ENCODE measurements at regions of chr20 and their contacts with region 1.

Region 1: DNA sequence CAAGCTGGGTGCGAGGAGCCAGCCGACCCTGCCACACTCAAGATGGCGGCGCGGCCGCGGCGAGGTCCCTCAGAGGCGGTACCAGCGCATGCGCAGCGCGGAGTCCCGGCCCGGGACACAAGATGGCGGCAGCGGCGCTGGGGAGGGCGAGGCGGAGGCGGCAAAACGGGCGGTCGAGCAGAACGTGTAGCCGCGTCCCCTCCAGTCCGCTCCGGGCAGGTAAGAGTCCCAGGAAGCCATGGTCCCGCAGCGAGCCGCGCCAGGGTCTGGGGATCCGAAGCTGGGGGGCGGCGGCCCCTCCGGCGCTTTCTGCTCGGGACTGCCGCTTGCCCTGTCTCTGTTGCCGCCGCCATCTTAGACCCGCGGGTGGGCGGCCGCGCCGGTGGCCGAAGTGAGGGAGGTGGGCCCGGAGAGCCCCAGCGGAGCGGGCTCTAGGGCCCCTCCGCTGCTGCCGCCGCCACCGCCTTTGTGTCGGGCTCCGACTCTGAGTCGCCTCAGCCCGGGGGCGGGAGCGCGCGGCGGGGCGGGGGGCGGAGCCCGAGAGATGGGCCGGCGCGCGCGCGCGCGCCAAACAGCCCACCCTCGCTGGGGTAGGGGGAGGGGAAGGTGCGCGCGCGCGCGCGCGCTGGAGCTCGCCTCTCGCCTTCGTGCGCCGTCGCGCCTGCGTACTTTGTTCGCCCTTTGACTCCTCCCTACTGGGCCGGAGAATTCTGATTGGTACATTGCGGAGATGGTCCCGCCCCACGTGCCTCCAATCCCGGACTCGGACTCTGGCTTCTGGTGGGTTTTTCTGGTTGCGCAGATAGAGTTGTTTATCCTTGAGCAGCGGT is at the start of gene PCIF1:
- DNase-seq: peak; percentile 96 to 100 (median 99)
- H3K4me3 ChIP-seq: peak within 1 kb of the TSS; percentile 97
- H3K4me3 Mint-ChIP-seq: peak within 1 kb of the TSS; percentile 90 to 98 (median 97)
- H3K27ac ChIP-seq: peak within 1 kb of the TSS; percentile 95
- H3K27ac Mint-ChIP-seq: peak within 1 kb of the TSS; percentile 95 to 99 (median 98)
- H3K4me1 ChIP-seq: peaks cover 12% of the 10 kb centered on the region
- H3K4me1 Mint-ChIP-seq: peaks cover 26 to 42% (median 27%) of the 10 kb centered on the region in 3 donors
- H3K27me3 ChIP-seq: no peaks in the 10 kb centered on the region
- H3K27me3 Mint-ChIP-seq: no peaks in the 10 kb centered on the region
- total RNA-seq, gene PCIF1: 33.6 to 34.1 TPM

Region 2: GRCh38 chr20:45880988-45881788 is 53.6 kb before region 1 on chr20 and contains the start of gene ZSWIM1:
- CTCF ChIA-PET with region 1: interaction called, 3 read pairs
- POLR2A ChIA-PET with region 1: interaction called, 47 read pairs
- DNase-seq: peak; percentile 96 to 99 (median 98)
- H3K4me3 ChIP-seq: peak within 1 kb of the TSS; percentile 77
- H3K4me3 Mint-ChIP-seq: peak within 1 kb of the TSS; percentile 79 to 91 (median 89)
- H3K27ac ChIP-seq: peak within 1 kb of the TSS; percentile 74
- H3K27ac Mint-ChIP-seq: peak within 1 kb of the TSS; percentile 85 to 97 (median 96)
- H3K4me1 ChIP-seq: peaks cover 19% of the 10 kb centered on the region
- H3K4me1 Mint-ChIP-seq: peaks cover 28 to 42% (median 41%) of the 10 kb centered on the region in 3 donors
- H3K27me3 ChIP-seq: no peaks in the 10 kb centered on the region
- H3K27me3 Mint-ChIP-seq: no peaks in the 10 kb centered on the region
- total RNA-seq, gene ZSWIM1: 12.3 TPM

Region 3: DNA sequence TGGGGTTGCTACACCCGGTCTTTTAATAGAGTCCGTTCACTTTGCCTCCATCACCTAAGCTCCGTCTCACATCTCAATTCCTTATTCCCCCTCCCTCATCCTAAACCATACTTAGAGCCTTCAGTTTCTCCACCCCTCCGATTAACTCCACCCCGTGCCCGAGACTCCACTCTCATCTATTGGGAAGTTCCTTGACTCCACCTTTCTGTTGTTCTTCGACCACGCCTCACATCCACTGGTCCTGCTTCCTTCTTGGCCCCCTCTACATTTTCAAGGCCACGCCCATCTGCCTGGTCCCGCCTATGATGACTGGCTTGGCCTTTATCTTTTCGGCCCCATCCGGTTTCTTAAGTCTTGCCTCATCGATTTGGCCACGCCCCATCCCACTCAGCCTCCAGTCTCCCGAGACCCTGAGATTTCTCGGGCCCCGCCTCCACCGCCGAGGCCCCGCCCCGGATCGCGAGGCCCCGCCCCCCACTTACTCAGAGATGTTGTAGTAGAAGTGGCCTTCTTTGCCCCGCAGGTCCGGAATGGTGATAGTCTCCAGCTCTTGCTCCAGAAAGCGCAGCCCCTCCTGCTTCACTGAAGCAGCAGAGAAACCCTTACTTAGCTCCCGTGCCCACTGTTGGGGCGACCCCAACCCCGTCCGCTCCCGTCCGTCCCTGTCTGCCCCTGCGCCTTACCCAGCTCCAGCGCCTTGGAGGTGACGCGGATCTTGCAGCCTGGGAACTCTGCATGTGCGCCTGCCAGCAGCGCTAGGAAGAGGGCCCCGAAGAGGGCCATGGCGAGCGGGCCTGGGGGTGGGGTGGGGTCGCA is 23.9 kb before region 1 on chr20:
- CTCF ChIA-PET with region 1: interaction called, 3 read pairs
- POLR2A ChIA-PET with region 1: interaction called, 19 read pairs
- DNase-seq: peak; percentile 82 to 90 (median 85)
- H3K4me3 ChIP-seq: peak overlapping the region; percentile 81
- H3K4me3 Mint-ChIP-seq: peak overlapping the region; percentile 69 to 92 (median 86)
- H3K27ac ChIP-seq: peak overlapping the region; percentile 39
- H3K27ac Mint-ChIP-seq: peak overlapping the region; percentile 60 to 94 (median 85)
- H3K4me1 ChIP-seq: peaks cover 13% of the 10 kb centered on the region
- H3K4me1 Mint-ChIP-seq: peaks cover 13 to 20% (median 15%) of the 10 kb centered on the region in 3 donors
- H3K27me3 ChIP-seq: no peaks in the 10 kb centered on the region
- H3K27me3 Mint-ChIP-seq: peaks cover 9 to 20% of the 10 kb centered on the region in 2 donors

Region 4: DNA sequence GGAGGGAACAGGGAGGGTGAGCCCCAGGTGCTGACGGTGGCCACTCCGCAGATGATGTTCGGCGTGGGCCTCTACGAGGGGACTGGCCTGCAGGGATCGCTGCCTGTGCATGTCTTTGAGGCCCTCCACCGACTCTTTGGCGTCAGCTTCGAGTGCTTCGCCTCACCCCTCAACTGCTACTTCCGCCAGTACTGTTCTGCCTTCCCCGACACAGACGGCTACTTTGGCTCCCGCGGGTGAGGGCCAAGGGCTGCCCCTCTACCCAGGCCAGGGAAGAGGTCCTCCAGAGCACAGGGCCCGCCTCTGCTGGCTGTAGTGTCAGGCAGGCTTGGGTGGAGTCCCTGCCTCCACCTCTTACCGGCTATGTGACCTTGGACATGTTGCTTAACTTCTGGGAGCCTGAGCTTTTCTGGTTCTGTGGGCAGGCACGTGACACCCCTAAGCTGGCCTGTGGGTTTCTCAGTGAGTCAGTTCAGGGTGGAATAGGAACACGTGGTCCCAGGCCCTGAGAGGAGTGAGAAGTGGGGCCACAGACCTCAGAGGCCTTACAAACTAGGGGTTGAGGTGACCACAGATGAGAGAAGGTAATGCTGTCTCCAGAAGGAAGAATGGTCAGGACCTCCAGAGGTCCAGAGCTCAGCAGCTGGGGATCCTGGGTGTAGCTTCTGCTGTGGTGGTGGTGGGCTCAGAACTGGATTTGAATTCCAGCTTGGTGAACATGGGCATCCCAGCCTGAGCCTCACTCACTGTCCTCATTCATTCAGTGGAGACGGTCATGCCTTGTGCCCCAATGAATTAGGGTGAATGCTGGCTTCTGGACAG is 11.6 kb after region 1 on chr20:
- CTCF ChIA-PET with region 1: interaction called, 3 read pairs
- POLR2A ChIA-PET with region 1: interaction called, 26 read pairs
- DNase-seq: peak in 3 of 5 donors; percentile 28 to 73 (median 57)
- H3K4me3 ChIP-seq: no peak overlapping the region
- H3K4me3 Mint-ChIP-seq: peak overlapping the region in 5 of 7 donors; percentile 32 to 70 (median 52)
- H3K27ac ChIP-seq: peak overlapping the region; percentile 3
- H3K27ac Mint-ChIP-seq: peak overlapping the region; percentile 47 to 97 (median 77)
- H3K4me1 ChIP-seq: peaks cover 10% of the 10 kb centered on the region
- H3K4me1 Mint-ChIP-seq: peaks cover 4 to 22% (median 15%) of the 10 kb centered on the region in 3 donors
- H3K27me3 ChIP-seq: no peaks in the 10 kb centered on the region
- H3K27me3 Mint-ChIP-seq: no peaks in the 10 kb centered on the region

Region 5: DNA sequence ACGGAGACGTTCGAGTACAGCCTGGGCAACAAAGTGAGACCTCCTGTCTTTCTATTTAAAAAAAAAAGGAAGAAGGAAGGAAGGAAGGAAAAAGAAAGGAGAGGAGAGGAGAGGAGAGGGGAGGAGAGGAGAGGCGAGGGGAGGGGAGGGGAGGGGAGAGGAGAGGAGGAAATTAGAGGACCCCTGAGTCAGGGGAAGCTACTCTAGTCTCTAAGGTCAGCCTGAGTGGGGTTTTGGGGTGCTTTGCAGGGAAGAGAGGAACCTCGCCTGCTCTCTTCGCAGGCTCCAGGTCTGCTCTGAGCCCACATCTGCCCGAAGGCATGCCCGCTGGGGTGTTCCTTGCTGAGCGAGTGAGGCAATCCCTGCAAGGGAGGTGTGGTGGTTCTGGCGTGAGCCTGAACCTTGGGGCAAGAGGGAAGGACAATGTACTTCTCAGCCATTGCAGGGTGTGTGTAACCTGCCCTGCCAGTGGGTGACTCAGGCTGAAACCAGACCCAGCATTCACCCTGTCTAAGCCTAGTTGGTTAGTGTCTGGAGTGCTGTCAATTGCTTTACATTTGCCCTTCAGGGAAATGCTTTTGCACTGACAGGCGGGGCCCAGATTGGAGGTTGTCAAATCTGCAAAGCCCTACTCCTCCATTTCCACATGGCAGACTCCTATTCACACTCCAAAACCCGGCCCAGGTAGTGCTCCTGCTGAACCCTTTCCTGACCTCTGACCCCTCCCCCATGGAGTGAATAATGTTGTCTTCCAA is 58.6 kb after region 1 on chr20:
- CTCF ChIA-PET with region 1: no interaction called
- POLR2A ChIA-PET with region 1: no interaction called
- DNase-seq: no peak
- H3K4me3 ChIP-seq: no peak overlapping the region
- H3K4me3 Mint-ChIP-seq: no peak overlapping the region
- H3K27ac ChIP-seq: no peak overlapping the region
- H3K27ac Mint-ChIP-seq: no peak overlapping the region
- H3K4me1 ChIP-seq: peaks cover 18% of the 10 kb centered on the region
- H3K4me1 Mint-ChIP-seq: peaks cover 10 to 17% (median 14%) of the 10 kb centered on the region in 3 donors
- H3K27me3 ChIP-seq: no peaks in the 10 kb centered on the region
- H3K27me3 Mint-ChIP-seq: peaks cover 22 to 34% of the 10 kb centered on the region in 2 donors